ENCODE measurements at regions of chr20 and their contacts with region 1.

Region 1: GRCh38 chr20:54199721-54200176 is 8.1 kb upstream of the PFDN4 start:
- DNase-seq: peak; percentile 67
- CTCF ChIP-seq: peak; percentile 88

Region 2: DNA sequence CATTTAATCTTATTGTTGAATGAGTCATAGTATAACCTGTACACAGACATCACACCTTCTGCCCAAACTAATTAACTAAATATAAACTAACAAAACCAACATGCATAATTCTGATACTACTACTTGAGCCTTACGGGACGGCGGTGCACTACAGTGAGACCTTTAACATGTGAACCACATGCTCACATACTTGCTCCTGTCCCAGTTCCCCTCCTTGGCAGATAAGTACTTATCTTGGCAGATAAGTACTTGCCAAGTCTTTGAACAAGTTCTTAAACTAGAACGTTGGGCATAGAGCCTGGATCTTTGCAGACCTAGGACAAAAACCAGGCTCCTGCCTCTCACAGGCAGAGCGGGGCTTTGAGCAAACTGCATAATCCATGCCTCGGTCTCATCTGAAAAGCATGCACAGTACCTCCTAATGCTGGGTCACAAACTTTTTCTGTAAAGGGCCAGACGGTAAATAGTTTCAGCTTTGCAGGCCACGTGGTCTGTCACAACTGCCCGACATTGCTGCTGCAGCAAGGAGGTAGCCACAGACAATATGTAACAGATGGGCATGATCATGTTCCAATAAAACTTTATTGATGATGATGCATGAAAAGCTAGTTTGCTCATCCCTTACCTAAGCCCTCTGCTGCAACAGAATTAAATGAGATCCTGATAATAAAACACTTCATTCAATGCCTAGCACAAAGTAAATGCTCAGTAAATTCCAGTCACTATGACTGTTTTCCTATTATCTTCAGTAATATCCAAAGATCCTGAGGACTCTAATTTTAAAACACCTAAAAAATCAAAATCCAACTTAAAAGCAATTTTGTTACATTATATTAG is 629.0 kb before region 1 on chr20:
- in situ Hi-C with region 1: loop called (anchors 25 kb)
- DNase-seq: no peak
- CTCF ChIP-seq: no peak

Region 3: DNA sequence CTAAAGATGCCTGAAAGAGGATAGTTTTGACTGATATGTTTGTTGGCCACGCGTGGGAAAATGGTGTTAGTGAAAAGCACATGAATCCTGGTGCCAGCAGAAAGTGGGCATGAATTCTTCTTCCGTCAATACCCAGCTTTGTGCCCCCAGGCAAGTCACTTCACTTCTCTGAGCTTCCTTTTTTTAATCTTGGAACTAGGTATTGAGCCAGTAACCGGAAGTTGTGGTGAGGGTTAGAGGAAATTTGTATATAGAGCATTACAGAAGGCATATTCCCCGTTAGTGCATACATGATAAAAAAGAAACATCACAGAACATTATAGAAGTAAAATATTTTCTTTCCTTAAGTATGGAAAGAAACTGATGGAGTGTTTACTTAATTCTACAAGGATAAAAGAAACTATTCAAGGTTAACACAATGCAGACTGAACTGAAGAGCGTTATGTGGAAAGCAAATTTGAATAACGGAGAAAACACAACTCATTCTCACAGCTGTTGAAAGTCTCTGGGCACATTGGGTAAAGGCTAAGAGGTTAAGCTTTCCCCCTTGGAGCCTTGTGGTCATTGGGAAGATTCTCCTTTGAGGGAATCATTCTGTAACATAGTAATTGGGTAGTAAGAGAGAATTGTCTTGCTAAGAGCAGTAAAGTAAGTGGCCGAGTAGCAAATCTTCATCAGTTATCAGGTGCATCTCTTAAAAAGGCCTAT is 352.5 kb before region 1 on chr20:
- in situ Hi-C with region 1: no loop called
- DNase-seq: no peak
- CTCF ChIP-seq: no peak

Region 4: GRCh38 chr20:53957451-53958172 is 242.1 kb before region 1 on chr20:
- in situ Hi-C with region 1: loop called (anchors 25 kb)
- DNase-seq: no peak
- CTCF ChIP-seq: no peak

Region 5: GRCh38 chr20:54103067-54103761 is 96.5 kb before region 1 on chr20:
- in situ Hi-C with region 1: loop called (anchors 5 kb)
- DNase-seq: peak; percentile 71
- CTCF ChIP-seq: peak; percentile 72

Region 6: DNA sequence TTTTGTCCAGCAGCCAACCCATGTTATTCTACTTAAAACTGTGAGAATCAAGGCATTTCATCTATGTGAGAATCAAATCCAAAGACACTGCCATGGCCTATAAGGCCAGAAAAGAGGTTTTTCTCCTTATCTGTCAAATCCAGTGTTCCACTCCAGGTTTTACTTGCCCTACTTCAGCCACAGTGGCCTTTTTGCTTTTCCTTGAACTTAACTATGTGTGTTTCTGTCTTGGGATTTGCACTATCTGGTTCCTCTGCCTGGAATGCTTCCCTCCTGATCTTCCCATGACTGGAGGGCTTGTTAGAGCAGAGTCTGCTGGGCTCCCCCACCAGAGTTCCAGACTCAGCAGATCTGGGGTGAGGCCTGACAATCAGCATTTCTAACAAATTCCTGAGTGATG is 162.5 kb after region 1 on chr20:
- in situ Hi-C with region 1: no loop called
- DNase-seq: no peak
- CTCF ChIP-seq: no peak

Measured in GM13976 (cell line).